ENCODE measurements at regions of chr14 and their contacts with region 1.

Region 1: DNA sequence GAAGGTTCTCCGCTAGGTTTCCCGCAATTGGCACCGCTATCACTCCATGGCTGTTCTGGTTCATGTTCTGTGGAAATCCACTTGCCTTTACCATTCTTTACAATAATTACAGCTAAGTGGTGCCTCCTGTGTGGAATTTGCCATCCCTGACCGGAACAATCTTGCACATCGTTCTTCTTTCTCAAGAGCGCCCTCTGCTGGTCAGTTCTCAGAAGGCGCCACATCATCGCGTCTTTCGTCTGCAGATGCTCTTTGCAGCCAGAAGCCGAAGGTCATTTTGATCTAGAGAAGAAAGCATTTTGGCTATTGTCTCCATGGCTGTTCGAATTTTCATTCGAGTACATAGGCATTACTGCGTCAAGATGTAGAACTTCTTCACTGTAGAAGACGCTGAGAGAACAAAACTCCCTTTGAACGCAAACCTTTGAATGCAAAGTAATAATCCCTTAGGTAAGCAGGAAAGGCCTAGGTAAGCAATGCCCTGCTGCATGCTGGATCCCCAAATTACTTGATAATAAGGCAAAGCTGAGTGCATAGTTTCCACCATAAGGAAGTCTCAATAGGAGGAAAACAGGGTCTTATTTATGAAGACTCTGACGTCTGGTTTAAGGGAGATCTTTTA is 10.1 kb upstream of the RTRAF start:
- DNase-seq: peak; percentile 67
- H3K4me3 Mint-ChIP-seq: no peak overlapping the region
- H3K27ac Mint-ChIP-seq: no peak overlapping the region
- H3K4me1 Mint-ChIP-seq: peaks cover 10% of the 10 kb centered on the region
- H3K27me3 Mint-ChIP-seq: no peaks in the 10 kb centered on the region

Region 2: DNA sequence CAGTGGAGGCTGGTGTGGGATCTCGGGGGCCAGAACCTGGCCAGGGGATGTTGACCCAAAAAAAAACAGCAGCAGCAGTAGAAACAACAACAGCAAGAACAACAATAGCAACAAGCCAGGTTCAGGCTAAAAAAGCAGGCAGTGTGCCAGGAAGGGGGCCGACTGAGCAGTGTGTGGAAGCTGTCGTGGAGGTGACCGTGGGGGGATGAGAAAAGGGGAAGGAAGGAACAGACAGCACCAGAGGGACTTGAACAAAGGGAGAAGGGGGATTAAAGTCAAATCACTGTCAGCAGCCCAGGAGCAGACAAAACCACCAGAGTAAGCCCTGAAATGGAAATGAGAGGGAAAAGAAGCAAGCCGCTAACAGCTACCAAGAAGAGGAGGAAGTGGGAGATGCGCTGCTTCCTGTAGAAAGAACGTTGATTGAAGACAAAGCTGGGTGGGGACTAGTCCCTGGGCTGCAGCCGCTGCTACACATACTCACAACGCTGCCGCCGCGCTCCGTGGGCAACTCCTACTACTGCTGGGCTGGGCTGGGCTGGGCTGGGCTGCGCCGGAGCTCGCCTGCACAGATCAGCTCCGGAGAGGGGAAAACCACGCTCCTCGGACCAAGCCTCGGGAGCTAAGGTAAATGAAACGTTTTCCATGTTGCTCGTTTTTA is 118.9 kb before region 1 on chr14 and contains the start of gene GNG2:
- intact Hi-C with region 1: loop called (anchors 5 kb)
- DNase-seq: peak; percentile 78
- H3K4me3 Mint-ChIP-seq: peak within 1 kb of the TSS; percentile 96
- H3K27ac Mint-ChIP-seq: peak within 1 kb of the TSS; percentile 84
- H3K4me1 Mint-ChIP-seq: peaks cover 53% of the 10 kb centered on the region
- H3K27me3 Mint-ChIP-seq: no peaks in the 10 kb centered on the region
- total RNA-seq, gene GNG2: 120 and 128 TPM in 2 replicates

Region 3: GRCh38 chr14:52315355-52315718 is 336.1 kb after region 1 on chr14:
- intact Hi-C with region 1: no loop called
- DNase-seq: no peak
- H3K4me3 Mint-ChIP-seq: peak overlapping the region; percentile 100
- H3K27ac Mint-ChIP-seq: peak overlapping the region; percentile 98
- H3K4me1 Mint-ChIP-seq: peaks cover 64% of the 10 kb centered on the region
- H3K27me3 Mint-ChIP-seq: no peaks in the 10 kb centered on the region

Measured in activated T-helper 2 cell treated with anti-CD3 and anti-CD28 coated beads, Interferon-gamma antibody, Interleukin-2, Interleukin-4, amounts not matched to agents 10 μg/mL and 5 μg/mL and 100 μg/mL, durations not matched to agents 14 hours and 24 hours and 36 hours (primary cell).